ENCODE measurements at regions of chr17 and their contacts with region 1.

Region 1: GRCh38 chr17:29760761-29761696 is 138.3 kb upstream of the CORO6 start:
- DNase-seq: peak; percentile 92 to 94
- ATAC-seq: peak; percentile 85 to 97 (median 90)
- H3K4me3 ChIP-seq: peak overlapping the region; percentile 85
- H3K4me3 Mint-ChIP-seq: peak overlapping the region; percentile 95
- H3K27ac ChIP-seq: peak overlapping the region; percentile 81
- H3K27ac Mint-ChIP-seq: peak overlapping the region; percentile 92 to 93
- H3K4me1 ChIP-seq: peaks cover 29% of the 10 kb centered on the region
- H3K4me1 Mint-ChIP-seq: peaks cover 35 to 39% of the 10 kb centered on the region in 2 donors
- H3K27me3 ChIP-seq: no peaks in the 10 kb centered on the region
- H3K27me3 Mint-ChIP-seq: no peaks in the 10 kb centered on the region
- CTCF ChIP-seq: no peak

Region 2: DNA sequence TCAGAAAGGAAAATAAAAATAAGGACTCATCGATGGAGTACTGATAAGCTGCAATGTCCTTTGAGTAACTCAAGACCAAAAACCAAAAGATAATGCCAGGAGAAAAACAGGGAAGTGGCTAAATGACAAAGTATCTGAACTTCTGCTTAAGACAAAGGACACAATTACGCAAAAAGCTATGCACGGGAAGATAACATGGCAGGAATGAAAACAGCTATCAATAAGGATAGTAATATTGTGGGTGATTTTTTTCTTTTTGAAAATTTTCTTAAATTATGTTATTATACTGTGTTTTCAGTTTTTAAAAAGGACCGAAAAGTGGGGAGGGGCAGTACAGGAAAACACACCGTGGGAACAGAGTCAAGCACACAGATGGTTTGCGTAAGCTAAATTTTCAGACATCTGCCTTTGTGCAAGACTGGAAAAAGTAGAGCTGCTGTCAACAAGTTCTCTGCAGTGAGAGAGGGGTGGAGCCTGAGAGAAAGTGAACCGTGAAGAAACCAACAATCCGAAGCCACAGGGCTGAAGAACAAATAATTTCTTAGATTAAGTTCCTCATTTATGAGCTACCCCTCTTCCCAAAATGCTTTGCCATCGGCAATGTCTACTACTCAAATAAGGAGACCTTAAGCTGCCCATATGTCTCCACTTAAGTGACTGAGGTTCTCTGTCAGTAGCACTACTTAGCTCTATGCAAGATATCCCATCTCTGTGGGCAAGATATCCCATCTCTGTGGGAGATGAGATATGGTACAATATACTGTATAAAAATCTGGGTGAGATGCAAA is 38.4 kb before region 1 on chr17:
- intact Hi-C with region 1: loop called (anchors 1 kb)
- DNase-seq: peak; percentile 35 to 81
- ATAC-seq: peak; percentile 66 to 85 (median 82)
- H3K4me3 ChIP-seq: no peak overlapping the region
- H3K4me3 Mint-ChIP-seq: peak overlapping the region; percentile 86
- H3K27ac ChIP-seq: peak overlapping the region; percentile 78
- H3K27ac Mint-ChIP-seq: peak overlapping the region; percentile 86 to 96
- H3K4me1 ChIP-seq: peaks cover 49% of the 10 kb centered on the region
- H3K4me1 Mint-ChIP-seq: peaks cover 79 to 84% of the 10 kb centered on the region in 2 donors
- H3K27me3 ChIP-seq: no peaks in the 10 kb centered on the region
- H3K27me3 Mint-ChIP-seq: no peaks in the 10 kb centered on the region
- CTCF ChIP-seq: no peak